ENCODE measurements at regions of chr21 and their contacts with region 1.

Region 1: DNA sequence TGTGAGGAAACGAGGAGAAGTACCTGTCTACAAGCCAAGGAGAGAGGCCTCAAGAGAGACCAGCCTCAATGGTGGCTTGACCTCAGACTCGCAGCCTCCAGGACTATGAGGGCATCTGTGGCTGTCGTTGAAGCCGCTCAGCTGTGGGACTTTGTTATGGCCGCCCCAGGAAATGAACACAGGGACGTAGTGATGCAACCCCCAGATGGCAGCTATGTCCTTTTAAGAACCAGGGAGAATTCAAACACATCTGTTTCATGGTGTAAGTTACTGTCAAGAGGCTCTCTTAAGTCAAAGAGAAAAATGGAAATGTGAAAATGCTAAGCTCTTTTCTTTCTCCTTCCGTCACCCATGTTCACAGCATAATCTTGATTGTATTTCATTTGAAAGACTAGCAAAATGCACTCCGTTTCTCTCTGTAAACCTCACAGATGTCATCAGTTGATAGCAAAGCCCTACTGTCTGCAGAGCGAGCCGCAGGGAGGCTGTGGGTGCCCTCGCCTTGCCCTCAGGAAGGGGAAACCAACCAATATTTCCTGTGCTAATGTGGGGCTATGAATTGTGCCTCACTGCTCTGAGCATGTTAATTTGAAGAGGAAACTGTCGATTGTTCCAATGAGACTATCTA is 21.3 kb downstream of the UBASH3A start:
- DNase-seq: peak; percentile 84
- H3K4me3 Mint-ChIP-seq: peak overlapping the region; percentile 48
- H3K27ac Mint-ChIP-seq: peak overlapping the region; percentile 86
- H3K4me1 Mint-ChIP-seq: peaks cover 72% of the 10 kb centered on the region
- H3K27me3 Mint-ChIP-seq: no peaks in the 10 kb centered on the region

Region 2: DNA sequence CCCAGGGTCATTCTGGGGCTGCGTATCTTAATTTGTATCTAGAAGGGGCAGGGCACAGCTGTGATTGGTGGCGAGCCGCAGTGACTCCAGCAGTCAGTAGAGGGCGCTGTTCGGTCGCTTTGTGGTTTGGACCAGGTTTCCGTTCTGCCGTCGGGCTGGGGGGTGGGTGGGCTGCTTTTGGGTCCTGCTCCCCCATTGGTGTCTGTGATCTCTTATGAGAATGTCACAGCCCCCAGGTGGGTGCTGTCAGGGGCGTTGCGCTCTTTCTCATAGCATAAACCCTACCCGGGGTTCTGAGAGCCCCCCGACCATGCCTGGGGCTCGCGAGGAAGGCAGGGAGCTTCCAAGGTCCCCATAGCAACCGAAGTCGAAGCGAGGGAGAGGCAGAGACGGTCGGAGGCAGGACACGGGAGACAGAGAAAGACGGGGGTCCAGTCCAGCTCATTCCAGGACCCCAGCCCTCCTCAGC is 115.2 kb before region 1 on chr21:
- CTCF ChIA-PET with region 1: interaction called, 15 read pairs
- POLR2A ChIA-PET with region 1: no interaction called
- intact Hi-C with region 1: no loop called
- DNase-seq: peak; percentile 83
- H3K4me3 Mint-ChIP-seq: no peak overlapping the region
- H3K27ac Mint-ChIP-seq: no peak overlapping the region
- H3K4me1 Mint-ChIP-seq: peaks cover 3% of the 10 kb centered on the region
- H3K27me3 Mint-ChIP-seq: peaks cover 5% of the 10 kb centered on the region

Region 3: DNA sequence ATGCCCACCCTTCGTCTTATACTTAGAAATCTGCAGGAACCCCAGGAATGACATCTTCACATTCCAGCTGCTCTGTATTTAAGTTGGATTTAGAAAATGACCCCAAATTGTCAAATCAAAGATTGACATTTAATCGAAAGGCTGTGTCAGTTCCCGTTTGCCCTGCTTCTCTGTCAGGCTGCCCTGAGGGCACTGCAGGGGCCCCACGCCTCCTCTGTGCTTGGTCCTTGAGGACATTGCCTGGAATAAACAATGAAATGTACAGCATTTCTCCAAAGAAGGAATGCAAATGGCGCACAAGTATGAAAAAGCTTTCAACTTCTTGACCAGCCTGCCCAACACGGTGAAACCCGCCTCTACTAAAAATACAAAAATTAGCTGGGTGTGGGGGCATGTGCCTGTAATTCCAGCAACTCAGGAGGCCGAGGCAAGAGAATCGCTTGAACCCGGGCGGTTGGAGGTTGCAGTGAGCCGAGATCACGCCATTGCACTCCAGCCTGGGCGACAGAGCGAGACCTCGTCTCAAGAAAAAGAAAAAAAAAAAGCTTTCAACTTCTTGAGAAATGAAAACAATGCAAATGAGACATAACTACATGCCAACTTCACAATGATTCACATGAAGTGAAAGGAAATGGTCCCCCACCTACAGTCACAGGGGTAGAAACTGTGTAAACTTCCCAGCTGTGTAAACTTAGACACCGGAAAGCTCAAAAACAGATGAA is 32.1 kb before region 1 on chr21:
- CTCF ChIA-PET with region 1: interaction called, 9 read pairs
- POLR2A ChIA-PET with region 1: interaction called, 8 read pairs
- intact Hi-C with region 1: loop called (anchors 1 kb)
- DNase-seq: peak; percentile 45
- H3K4me3 Mint-ChIP-seq: peak overlapping the region; percentile 64
- H3K27ac Mint-ChIP-seq: peak overlapping the region; percentile 84
- H3K4me1 Mint-ChIP-seq: peaks cover 52% of the 10 kb centered on the region
- H3K27me3 Mint-ChIP-seq: no peaks in the 10 kb centered on the region

Region 4: DNA sequence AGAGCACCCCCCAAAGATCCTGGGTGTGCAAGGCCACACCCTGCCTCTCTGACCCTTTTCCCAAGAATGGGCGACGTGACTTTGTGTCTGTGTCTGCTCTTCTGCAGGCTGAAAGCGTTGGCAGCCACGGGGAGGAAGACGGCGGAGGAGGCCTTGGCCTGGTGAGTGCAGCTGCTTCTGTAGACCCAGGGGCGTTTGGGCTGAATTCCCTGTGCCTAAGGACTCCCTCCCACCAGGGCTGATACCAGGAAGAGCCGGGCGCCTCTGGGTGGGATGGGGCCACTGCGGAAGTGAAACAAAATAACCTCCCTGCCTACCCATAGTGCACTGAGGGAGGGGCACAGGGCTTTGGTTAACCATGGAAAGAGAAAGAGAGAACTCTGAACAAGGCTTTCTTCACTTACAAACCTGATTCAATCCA is 18.8 kb before region 1 on chr21:
- CTCF ChIA-PET with region 1: interaction called, 9 read pairs
- POLR2A ChIA-PET with region 1: interaction called, 79 read pairs
- intact Hi-C with region 1: loop called (anchors 1 kb)
- DNase-seq: peak; percentile 84
- H3K4me3 Mint-ChIP-seq: peak overlapping the region; percentile 98
- H3K27ac Mint-ChIP-seq: peak overlapping the region; percentile 99
- H3K4me1 Mint-ChIP-seq: peaks cover 54% of the 10 kb centered on the region
- H3K27me3 Mint-ChIP-seq: no peaks in the 10 kb centered on the region